ENCODE measurements at regions of chr4 and their contacts with region 1.

Region 1: GRCh38 chr4:82275431-82276331 is 98.1 kb downstream of the HNRNPD start:
- DNase-seq: no peak
- H3K4me3 ChIP-seq: no peak overlapping the region
- H3K27ac ChIP-seq: no peak overlapping the region
- H3K4me1 ChIP-seq: no peaks in the 10 kb centered on the region
- H3K27me3 ChIP-seq: no peaks in the 10 kb centered on the region
- CTCF ChIP-seq: no peak

Region 2: DNA sequence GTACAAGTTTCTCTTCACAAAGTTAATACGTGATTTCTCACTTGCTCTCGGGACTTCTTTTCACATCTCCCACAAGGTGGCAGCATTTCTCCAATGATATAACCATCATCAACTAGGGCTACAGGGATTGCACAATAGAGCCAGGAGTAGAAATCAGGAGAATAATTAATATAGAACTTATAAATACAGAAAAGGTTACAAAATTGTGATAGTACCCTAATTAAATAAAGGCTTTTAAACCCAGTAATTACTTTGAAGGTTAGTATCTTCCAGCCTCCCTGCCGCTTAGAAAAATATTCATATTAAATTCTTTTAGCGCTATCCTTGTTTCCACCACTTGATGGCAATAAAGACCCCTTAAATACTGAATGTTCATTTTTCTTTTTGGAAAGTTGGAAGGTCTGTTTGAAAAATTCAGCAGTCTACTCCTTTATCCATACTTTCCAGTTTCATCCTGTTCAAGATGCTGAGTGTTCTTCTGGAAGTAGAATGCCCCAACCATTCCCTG is 869.7 kb before region 1 on chr4:
- intact Hi-C with region 1: loop called (anchors 10 kb)
- DNase-seq: no peak
- H3K4me3 ChIP-seq: no peak overlapping the region
- H3K27ac ChIP-seq: no peak overlapping the region
- H3K4me1 ChIP-seq: peaks cover 0 to 3% (median 0%) of the 10 kb centered on the region in 4 donors
- H3K27me3 ChIP-seq: no peaks in the 10 kb centered on the region
- CTCF ChIP-seq: peak; percentile 68 to 78

Region 3: GRCh38 chr4:82900331-82901128 is 624.8 kb after region 1 on chr4 and contains the start of gene THAP9:
- intact Hi-C with region 1: no loop called
- DNase-seq: peak; percentile 99
- H3K4me3 ChIP-seq: peak within 1 kb of the TSS; percentile 60 to 68
- H3K27ac ChIP-seq: peak within 1 kb of the TSS; percentile 91 to 93
- H3K4me1 ChIP-seq: peaks cover 0 to 41% (median 19%) of the 10 kb centered on the region in 4 donors
- H3K27me3 ChIP-seq: no peaks in the 10 kb centered on the region
- CTCF ChIP-seq: no peak